ENCODE measurements at regions of chr6 and their contacts with region 1.

Region 1: GRCh38 chr6:151494235-151494935 is 568 bp downstream of the CCDC170 start:
- DNase-seq: peak; percentile 38 to 63 (median 41)
- H3K4me3 ChIP-seq: peak overlapping the region; percentile 87 to 91 (median 88)
- H3K4me3 Mint-ChIP-seq: peak overlapping the region; percentile 92 to 97
- H3K27ac ChIP-seq: peak overlapping the region; percentile 91 to 95
- H3K27ac Mint-ChIP-seq: peak overlapping the region; percentile 89 to 96 (median 93)
- H3K4me1 ChIP-seq: peaks cover 51 to 58% of the 10 kb centered on the region in 2 donors
- H3K4me1 Mint-ChIP-seq: peaks cover 48% of the 10 kb centered on the region
- H3K27me3 ChIP-seq: no peaks in the 10 kb centered on the region
- H3K27me3 Mint-ChIP-seq: peaks cover 0 to 6% (median 4%) of the 10 kb centered on the region in 3 donors
- CTCF ChIP-seq: no peak

Region 2: GRCh38 chr6:151451950-151452749 is 42.2 kb before region 1 on chr6 and contains the start of gene RMND1:
- intact Hi-C with region 1: loop called in 1 of 2 experiments (anchors 5 kb)
- DNase-seq: peak; percentile 100
- H3K4me3 ChIP-seq: peak within 1 kb of the TSS; percentile 71 to 89 (median 71)
- H3K4me3 Mint-ChIP-seq: peak within 1 kb of the TSS; percentile 97 to 98
- H3K27ac ChIP-seq: peak within 1 kb of the TSS; percentile 86 to 87
- H3K27ac Mint-ChIP-seq: peak within 1 kb of the TSS; percentile 89 to 98 (median 96)
- H3K4me1 ChIP-seq: peaks cover 21 to 30% of the 10 kb centered on the region in 2 donors
- H3K4me1 Mint-ChIP-seq: peaks cover 43% of the 10 kb centered on the region
- H3K27me3 ChIP-seq: no peaks in the 10 kb centered on the region
- H3K27me3 Mint-ChIP-seq: peaks cover 0 to 4% (median 0%) of the 10 kb centered on the region in 3 donors
- CTCF ChIP-seq: no peak
- polyA plus RNA-seq, gene RMND1: 5.7 to 6.7 (median 6.6) TPM

Region 3: DNA sequence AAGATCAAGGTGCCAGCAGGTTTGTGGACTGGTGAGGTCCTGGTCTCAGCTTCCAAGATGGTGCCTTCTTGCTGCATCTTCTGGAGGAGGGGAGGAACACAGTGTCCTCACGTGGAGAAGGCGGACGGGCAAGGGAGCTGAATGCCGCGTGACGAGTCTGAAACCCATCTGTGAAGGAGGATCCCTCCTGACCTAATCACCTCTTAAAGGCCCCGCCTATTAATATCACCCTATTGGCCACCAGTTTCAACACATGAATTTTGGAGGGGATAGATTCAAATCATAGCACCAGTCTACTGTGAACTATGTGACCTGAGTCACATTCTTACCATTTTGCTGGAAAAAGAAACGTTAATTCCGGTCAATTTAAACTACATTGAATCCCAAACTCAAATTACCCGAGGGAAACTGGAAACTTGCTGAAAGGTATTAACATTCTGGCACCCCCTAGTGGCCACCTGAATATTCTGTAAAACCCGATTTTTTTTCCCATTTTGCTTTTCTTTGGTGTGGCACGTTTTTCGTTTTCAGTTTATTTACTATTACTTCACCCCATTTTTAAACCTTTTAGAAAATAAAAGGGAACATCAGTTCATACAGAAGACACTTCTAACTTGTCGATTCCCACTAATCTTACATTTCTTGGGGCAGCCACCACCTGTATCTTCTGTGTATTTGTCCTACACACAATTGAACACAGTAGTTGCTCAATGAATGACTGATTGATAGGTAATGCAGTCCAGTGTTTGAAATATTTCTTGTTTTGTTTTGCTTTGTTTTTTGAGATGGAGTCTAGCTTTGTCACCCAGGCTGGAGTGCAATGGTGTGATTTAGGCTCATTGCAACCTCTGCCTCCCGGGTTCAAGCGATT is 18.5 kb before region 1 on chr6:
- intact Hi-C with region 1: loop called in 1 of 2 experiments (anchors 2 kb)
- DNase-seq: peak; percentile 26 to 54 (median 49)
- H3K4me3 ChIP-seq: peak overlapping the region in 1 of 3 experiments; percentile 52
- H3K4me3 Mint-ChIP-seq: peak overlapping the region; percentile 27 to 65
- H3K27ac ChIP-seq: no peak overlapping the region
- H3K27ac Mint-ChIP-seq: peak overlapping the region in 3 of 7 donors; percentile 21 to 68 (median 46)
- H3K4me1 ChIP-seq: peaks cover 10 to 24% of the 10 kb centered on the region in 2 donors
- H3K4me1 Mint-ChIP-seq: peaks cover 21% of the 10 kb centered on the region
- H3K27me3 ChIP-seq: no peaks in the 10 kb centered on the region
- H3K27me3 Mint-ChIP-seq: peaks cover 0 to 1% (median 0%) of the 10 kb centered on the region in 3 donors
- CTCF ChIP-seq: peak; percentile 84